ENCODE measurements at regions of chr10 and their contacts with region 1.

Region 1: GRCh38 chr10:128211953-128212727 is 85.9 kb upstream of the MKI67 start:
- DNase-seq: peak; percentile 60 to 93 (median 77)
- ATAC-seq: peak; percentile 78
- H3K4me3 ChIP-seq: peak overlapping the region; percentile 53
- H3K4me3 Mint-ChIP-seq: peak overlapping the region; percentile 96
- H3K27ac ChIP-seq: no peak overlapping the region
- H3K27ac Mint-ChIP-seq: peak overlapping the region; percentile 79
- H3K4me1 ChIP-seq: peaks cover 22% of the 10 kb centered on the region
- H3K4me1 Mint-ChIP-seq: peaks cover 26% of the 10 kb centered on the region
- H3K27me3 ChIP-seq: no peaks in the 10 kb centered on the region
- H3K27me3 Mint-ChIP-seq: no peaks in the 10 kb centered on the region
- CTCF ChIP-seq: peak; percentile 98

Region 2: DNA sequence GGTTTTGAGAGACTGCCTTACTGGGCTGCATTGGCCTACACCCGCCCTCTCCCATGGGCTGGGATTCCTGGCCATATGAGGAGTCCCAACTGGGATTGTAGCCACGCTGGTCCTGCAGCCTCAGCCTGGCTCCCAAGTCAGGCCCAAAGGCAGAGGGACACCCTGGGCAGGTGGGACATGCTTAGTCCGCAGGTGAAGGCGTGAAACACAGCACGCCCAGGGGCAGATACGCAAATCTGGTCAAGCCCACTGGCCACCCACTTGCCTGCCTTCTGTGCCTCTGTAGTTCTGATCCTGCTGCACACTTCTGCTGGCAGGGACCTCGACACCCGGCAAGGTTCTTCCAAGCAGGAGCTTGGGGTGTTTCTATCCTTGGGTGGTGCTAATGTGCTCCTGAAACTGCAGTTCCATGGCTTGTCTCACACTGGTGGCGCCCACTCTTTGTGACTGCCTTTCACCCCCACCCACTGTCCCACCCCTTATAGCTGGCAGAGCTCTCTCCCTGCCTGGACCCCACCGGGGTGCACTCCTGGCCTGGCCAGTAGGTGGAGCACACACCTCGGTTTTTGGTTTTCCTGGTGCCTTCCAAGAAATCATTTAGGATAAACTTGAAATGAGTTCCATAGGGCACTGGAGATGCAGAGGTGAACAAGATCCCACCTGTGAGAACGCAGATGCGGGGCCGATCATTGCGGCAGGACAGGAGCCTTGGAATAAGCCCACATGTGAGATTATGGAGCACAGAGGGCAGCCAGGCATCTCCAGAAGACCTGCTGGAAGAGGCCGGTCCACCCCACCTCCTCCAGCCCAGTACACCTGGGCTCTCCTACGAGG is 133.8 kb before region 1 on chr10:
- CTCF ChIA-PET with region 1: no interaction called
- POLR2A ChIA-PET with region 1: no interaction called
- intact Hi-C with region 1: loop called in 1 of 2 experiments (anchors 5 kb)
- DNase-seq: peak in 7 of 14 experiments; percentile 35 to 64 (median 47)
- ATAC-seq: peak; percentile 73
- H3K4me3 ChIP-seq: no peak overlapping the region
- H3K4me3 Mint-ChIP-seq: no peak overlapping the region
- H3K27ac ChIP-seq: no peak overlapping the region
- H3K27ac Mint-ChIP-seq: no peak overlapping the region
- H3K4me1 ChIP-seq: no peaks in the 10 kb centered on the region
- H3K4me1 Mint-ChIP-seq: peaks cover 7% of the 10 kb centered on the region
- H3K27me3 ChIP-seq: no peaks in the 10 kb centered on the region
- H3K27me3 Mint-ChIP-seq: no peaks in the 10 kb centered on the region
- CTCF ChIP-seq: peak; percentile 70

Region 3: DNA sequence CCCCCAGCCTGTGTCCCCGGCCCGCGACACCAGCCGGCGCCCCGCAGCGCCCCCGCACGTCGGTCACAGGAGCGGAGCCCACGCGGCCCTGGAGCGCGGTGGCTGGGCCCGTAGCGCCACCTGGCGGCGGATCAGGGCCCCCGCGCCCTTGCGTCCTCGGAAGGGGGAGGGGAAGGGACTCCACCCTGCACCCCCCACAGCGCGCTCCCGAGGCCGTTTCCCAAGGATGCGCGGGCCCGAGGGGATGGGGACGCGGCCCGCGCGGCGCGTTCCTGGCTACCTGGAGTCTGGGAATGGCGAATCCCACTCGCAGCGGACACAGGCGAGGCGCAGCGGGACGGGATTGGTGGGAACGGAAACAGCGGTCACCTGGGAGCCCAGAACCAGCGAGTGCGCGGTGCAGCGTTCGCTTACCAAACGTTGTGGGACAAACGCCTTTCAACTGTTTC is 62.1 kb before region 1 on chr10:
- CTCF ChIA-PET with region 1: interaction called, 3 read pairs
- POLR2A ChIA-PET with region 1: no interaction called
- intact Hi-C with region 1: loop called in 1 of 2 experiments (anchors 2 kb)
- DNase-seq: peak; percentile 62 to 94 (median 72)
- ATAC-seq: peak; percentile 98
- H3K4me3 ChIP-seq: peak overlapping the region; percentile 73
- H3K4me3 Mint-ChIP-seq: peak overlapping the region; percentile 69
- H3K27ac ChIP-seq: no peak overlapping the region
- H3K27ac Mint-ChIP-seq: no peak overlapping the region
- H3K4me1 ChIP-seq: peaks cover 11% of the 10 kb centered on the region
- H3K4me1 Mint-ChIP-seq: no peaks in the 10 kb centered on the region
- H3K27me3 ChIP-seq: peaks cover 0 to 2% of the 10 kb centered on the region in 2 experiments
- H3K27me3 Mint-ChIP-seq: no peaks in the 10 kb centered on the region
- CTCF ChIP-seq: peak; percentile 77

Region 4: DNA sequence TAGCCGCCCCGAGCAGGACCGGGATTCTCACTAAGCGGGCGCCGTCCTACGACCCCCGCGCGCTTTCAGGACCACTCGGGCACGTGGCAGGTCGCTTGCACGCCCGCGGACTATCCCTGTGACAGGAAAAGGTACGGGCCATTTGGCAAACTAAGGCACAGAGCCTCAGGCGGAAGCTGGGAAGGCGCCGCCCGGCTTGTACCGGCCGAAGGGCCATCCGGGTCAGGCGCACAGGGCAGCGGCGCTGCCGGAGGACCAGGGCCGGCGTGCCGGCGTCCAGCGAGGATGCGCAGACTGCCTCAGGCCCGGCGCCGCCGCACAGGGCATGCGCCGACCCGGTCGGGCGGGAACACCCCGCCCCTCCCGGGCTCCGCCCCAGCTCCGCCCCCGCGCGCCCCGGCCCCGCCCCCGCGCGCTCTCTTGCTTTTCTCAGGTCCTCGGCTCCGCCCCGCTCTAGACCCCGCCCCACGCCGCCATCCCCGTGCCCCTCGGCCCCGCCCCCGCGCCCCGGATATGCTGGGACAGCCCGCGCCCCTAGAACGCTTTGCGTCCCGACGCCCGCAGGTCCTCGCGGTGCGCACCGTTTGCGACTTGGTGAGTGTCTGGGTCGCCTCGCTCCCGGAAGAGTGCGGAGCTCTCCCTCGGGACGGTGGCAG is 1254.7 kb after region 1 on chr10 and contains the start of gene MGMT:
- CTCF ChIA-PET with region 1: no interaction called
- POLR2A ChIA-PET with region 1: no interaction called
- intact Hi-C with region 1: loop called in 1 of 2 experiments (anchors 10 kb)
- DNase-seq: peak; percentile 95 to 100 (median 99)
- ATAC-seq: peak; percentile 98
- H3K4me3 ChIP-seq: peak within 1 kb of the TSS; percentile 78
- H3K4me3 Mint-ChIP-seq: peak within 1 kb of the TSS; percentile 93
- H3K27ac ChIP-seq: peak within 1 kb of the TSS; percentile 58
- H3K27ac Mint-ChIP-seq: peak within 1 kb of the TSS; percentile 90
- H3K4me1 ChIP-seq: peaks cover 21% of the 10 kb centered on the region
- H3K4me1 Mint-ChIP-seq: peaks cover 22% of the 10 kb centered on the region
- H3K27me3 ChIP-seq: no peaks in the 10 kb centered on the region
- H3K27me3 Mint-ChIP-seq: no peaks in the 10 kb centered on the region
- CTCF ChIP-seq: no peak
- total RNA-seq, gene MGMT: 9.0 to 9.6 TPM

Region 5: GRCh38 chr10:129978322-129978721 is 1766.2 kb after region 1 on chr10:
- CTCF ChIA-PET with region 1: no interaction called
- POLR2A ChIA-PET with region 1: no interaction called
- intact Hi-C with region 1: loop called (anchors 5 kb)
- DNase-seq: no peak
- ATAC-seq: no peak
- H3K4me3 ChIP-seq: no peak overlapping the region
- H3K4me3 Mint-ChIP-seq: no peak overlapping the region
- H3K27ac ChIP-seq: no peak overlapping the region
- H3K27ac Mint-ChIP-seq: no peak overlapping the region
- H3K4me1 ChIP-seq: no peaks in the 10 kb centered on the region
- H3K4me1 Mint-ChIP-seq: no peaks in the 10 kb centered on the region
- H3K27me3 ChIP-seq: peaks cover 40 to 52% of the 10 kb centered on the region in 2 experiments
- H3K27me3 Mint-ChIP-seq: peaks cover 84% of the 10 kb centered on the region
- CTCF ChIP-seq: no peak